A673 (cell line): ENCODE measurements at regions of chr1 and their contacts with region 1.

Region 1: GRCh38 chr1:205977402-205978014 is 25.7 kb downstream of the RAB7B start:
- DNase-seq: peak; percentile 80
- H3K4me3 ChIP-seq: no peak overlapping the region
- H3K27ac ChIP-seq: no peak overlapping the region
- H3K4me1 ChIP-seq: no peaks in the 10 kb centered on the region
- H3K27me3 ChIP-seq: no peaks in the 10 kb centered on the region
- CTCF ChIP-seq: peak; percentile 98

Region 2: DNA sequence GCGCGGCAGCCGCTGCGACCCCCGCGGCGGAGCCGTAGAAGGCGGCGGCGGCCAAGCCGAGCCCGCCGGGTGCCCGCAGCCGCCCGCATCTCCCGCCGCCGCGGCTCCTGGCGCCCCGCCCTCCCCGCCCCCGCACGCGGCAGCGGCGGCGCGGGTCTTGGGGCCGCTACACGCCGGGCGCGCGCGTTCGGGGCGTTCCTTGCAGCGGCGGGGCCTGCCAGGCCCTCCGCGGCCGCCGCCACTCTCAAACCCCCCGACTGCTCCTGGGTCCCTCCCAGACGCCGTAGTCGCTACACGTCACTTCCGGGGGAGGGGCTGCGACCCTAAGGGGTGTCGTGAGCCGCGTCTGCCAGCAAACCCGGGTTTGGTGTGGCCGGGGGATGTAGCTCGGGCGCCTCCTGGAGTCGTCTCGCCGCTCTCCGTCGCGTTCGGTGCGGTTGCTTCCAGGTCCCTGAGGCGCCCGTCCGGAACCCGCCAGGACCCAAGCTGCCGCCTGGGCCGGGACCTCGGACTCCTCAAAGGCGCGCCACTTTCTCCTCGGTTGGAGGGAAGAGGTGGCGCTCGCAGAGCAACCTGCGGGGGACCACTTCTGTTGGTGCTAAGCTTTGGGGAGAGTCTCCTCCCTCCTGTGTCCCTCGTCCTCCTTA is 345.7 kb before region 1 on chr1 and contains the start of gene ELK4:
- CTCF ChIA-PET with region 1: no interaction called
- POLR2A ChIA-PET with region 1: no interaction called
- intact Hi-C with region 1: no loop called
- DNase-seq: peak; percentile 99
- H3K4me3 ChIP-seq: peak within 1 kb of the TSS; percentile 69
- H3K27ac ChIP-seq: peak within 1 kb of the TSS; percentile 79
- H3K4me1 ChIP-seq: peaks cover 7% of the 10 kb centered on the region
- H3K27me3 ChIP-seq: peaks cover 4% of the 10 kb centered on the region
- CTCF ChIP-seq: peak; percentile 77
- total RNA-seq, gene ELK4: 35.4 and 38.2 TPM in 2 replicates

Region 3: GRCh38 chr1:205791568-205792180 is 185.8 kb before region 1 on chr1:
- CTCF ChIA-PET with region 1: interaction called, 47 read pairs
- POLR2A ChIA-PET with region 1: no interaction called
- intact Hi-C with region 1: loop called (anchors 1 kb)
- DNase-seq: peak; percentile 55
- H3K4me3 ChIP-seq: no peak overlapping the region
- H3K27ac ChIP-seq: no peak overlapping the region
- H3K4me1 ChIP-seq: no peaks in the 10 kb centered on the region
- H3K27me3 ChIP-seq: no peaks in the 10 kb centered on the region
- CTCF ChIP-seq: peak; percentile 74

Region 4: DNA sequence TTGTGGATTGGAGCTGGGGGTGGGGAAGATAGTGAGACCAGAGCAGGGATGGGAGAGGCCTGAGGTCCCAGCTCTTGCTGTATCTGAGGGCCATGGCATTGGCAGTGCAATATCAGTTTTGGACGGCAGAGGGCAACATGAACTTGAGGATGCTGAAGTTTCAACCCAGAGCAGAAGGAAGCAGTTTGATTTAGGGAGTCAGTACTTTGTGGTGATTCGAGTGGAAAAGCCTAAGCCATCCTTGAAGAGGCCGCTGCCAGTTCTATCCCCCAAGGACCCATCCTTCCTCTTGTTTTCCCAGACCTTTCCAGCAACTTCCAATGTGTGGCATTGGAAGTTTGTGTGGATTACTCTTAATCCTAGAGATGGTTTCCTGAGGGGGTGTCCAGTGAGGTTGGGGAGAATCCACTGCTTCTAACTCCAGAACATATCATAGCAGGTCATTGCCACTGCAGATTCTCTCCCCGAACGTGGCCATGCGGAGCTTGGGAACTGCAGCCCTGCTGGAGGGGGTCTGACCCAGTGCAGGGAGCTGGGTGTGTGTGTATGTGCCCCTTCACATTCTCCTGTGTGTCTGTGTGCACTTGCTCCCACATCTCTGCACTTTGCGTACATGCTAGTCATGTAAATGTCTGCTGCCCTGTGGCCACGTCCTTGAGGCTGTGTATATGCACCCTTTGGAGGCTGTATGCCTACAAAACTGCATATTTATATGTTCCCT is 58.3 kb before region 1 on chr1:
- CTCF ChIA-PET with region 1: interaction called, 115 read pairs
- POLR2A ChIA-PET with region 1: no interaction called
- intact Hi-C with region 1: loop called (anchors 1 kb)
- DNase-seq: peak; percentile 80
- H3K4me3 ChIP-seq: no peak overlapping the region
- H3K27ac ChIP-seq: no peak overlapping the region
- H3K4me1 ChIP-seq: no peaks in the 10 kb centered on the region
- H3K27me3 ChIP-seq: no peaks in the 10 kb centered on the region
- CTCF ChIP-seq: peak; percentile 85